ENCODE measurements at regions of chr7 and their contacts with region 1.

Region 1: DNA sequence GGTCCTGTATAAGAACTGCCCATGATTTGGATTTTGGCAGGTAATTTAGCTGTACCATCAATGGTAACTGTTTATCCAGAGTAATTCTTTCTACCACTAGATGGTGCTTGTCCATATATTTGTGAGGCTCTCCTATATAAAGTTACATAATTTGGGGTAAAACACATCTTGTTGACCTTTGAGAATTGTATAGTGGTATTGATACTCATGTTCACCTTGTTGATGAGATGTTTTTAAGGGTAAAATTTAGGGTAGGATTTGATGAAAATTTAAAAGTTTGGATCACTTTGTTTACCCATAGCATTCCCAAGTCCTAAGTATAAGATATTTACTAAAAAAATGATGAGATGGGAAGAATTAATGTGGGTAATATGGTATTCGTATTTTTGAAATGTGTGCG is 31.6 kb downstream of the ST7 start:
- DNase-seq: peak in 6 of 9 donors; percentile 10 to 50 (median 45)
- ATAC-seq: peak; percentile 79
- H3K4me3 ChIP-seq: no peak overlapping the region
- H3K4me3 Mint-ChIP-seq: no peak overlapping the region
- H3K27ac ChIP-seq: no peak overlapping the region
- H3K27ac Mint-ChIP-seq: no peak overlapping the region
- H3K4me1 ChIP-seq: no peaks in the 10 kb centered on the region
- H3K4me1 Mint-ChIP-seq: peaks cover 0 to 5% (median 0%) of the 10 kb centered on the region in 7 donors
- H3K27me3 ChIP-seq: no peaks in the 10 kb centered on the region
- H3K27me3 Mint-ChIP-seq: peaks cover 0 to 3% (median 0%) of the 10 kb centered on the region in 5 donors

Region 2: GRCh38 chr7:117014673-117015133 is 29.8 kb after region 1 on chr7:
- CTCF ChIA-PET with region 1: interaction called, 64 read pairs
- POLR2A ChIA-PET with region 1: no interaction called
- intact Hi-C with region 1: loop called (anchors 1 kb)
- DNase-seq: no peak
- ATAC-seq: peak; percentile 74
- H3K4me3 ChIP-seq: no peak overlapping the region
- H3K4me3 Mint-ChIP-seq: peak overlapping the region in 3 of 10 donors; percentile 1 to 45 (median 35)
- H3K27ac ChIP-seq: no peak overlapping the region
- H3K27ac Mint-ChIP-seq: no peak overlapping the region
- H3K4me1 ChIP-seq: peaks cover 9 to 21% of the 10 kb centered on the region in 2 donors
- H3K4me1 Mint-ChIP-seq: peaks cover 23 to 41% (median 33%) of the 10 kb centered on the region in 7 donors
- H3K27me3 ChIP-seq: no peaks in the 10 kb centered on the region
- H3K27me3 Mint-ChIP-seq: peaks cover 0 to 53% (median 0%) of the 10 kb centered on the region in 5 donors

Region 3: DNA sequence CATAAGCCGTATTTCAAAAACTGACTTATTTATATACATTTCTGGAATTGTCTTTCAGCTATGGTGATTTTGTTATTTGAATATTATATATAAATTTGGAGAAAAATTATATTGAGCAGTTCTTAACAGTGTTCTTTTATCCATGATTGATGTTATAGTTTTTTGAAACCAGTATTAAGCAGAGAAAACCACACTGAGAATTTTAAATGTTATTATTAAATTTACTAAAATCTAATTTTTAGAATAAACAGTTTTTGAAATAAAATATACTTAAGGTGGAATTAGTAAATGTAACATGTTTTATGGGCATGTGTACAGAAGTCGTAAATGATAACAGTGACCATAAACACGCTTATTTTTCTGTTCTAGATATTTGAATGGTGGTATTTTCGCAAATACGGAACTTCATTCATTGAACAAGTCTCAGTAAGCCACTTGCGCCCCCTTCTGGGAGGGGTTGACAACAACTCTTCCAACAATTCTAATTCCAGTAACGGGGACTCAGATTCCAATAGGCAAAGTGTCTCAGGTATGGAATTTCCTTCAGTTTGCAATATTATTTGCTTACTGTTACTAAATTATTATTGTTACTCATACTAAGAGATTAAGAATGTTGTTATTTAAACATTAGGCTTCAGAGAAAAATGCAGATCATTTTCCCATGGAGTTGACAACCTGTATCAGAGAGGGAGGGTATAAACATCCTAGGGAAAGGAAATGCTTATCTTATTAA is 134.4 kb after region 1 on chr7:
- CTCF ChIA-PET with region 1: interaction called, 68 read pairs
- POLR2A ChIA-PET with region 1: no interaction called
- intact Hi-C with region 1: loop called (anchors 1 kb)
- DNase-seq: peak; percentile 43 to 78 (median 69)
- ATAC-seq: peak; percentile 78
- H3K4me3 ChIP-seq: no peak overlapping the region
- H3K4me3 Mint-ChIP-seq: no peak overlapping the region
- H3K27ac ChIP-seq: no peak overlapping the region
- H3K27ac Mint-ChIP-seq: no peak overlapping the region
- H3K4me1 ChIP-seq: no peaks in the 10 kb centered on the region
- H3K4me1 Mint-ChIP-seq: no peaks in the 10 kb centered on the region
- H3K27me3 ChIP-seq: no peaks in the 10 kb centered on the region
- H3K27me3 Mint-ChIP-seq: peaks cover 0 to 27% (median 0%) of the 10 kb centered on the region in 5 donors

Region 4: GRCh38 chr7:117127585-117128168 is 142.8 kb after region 1 on chr7:
- CTCF ChIA-PET with region 1: interaction called, 68 read pairs
- POLR2A ChIA-PET with region 1: no interaction called
- intact Hi-C with region 1: loop called (anchors 1 kb)
- DNase-seq: peak in 8 of 9 donors; percentile 9 to 53 (median 44)
- ATAC-seq: peak; percentile 76
- H3K4me3 ChIP-seq: no peak overlapping the region
- H3K4me3 Mint-ChIP-seq: no peak overlapping the region
- H3K27ac ChIP-seq: no peak overlapping the region
- H3K27ac Mint-ChIP-seq: no peak overlapping the region
- H3K4me1 ChIP-seq: no peaks in the 10 kb centered on the region
- H3K4me1 Mint-ChIP-seq: no peaks in the 10 kb centered on the region
- H3K27me3 ChIP-seq: no peaks in the 10 kb centered on the region
- H3K27me3 Mint-ChIP-seq: peaks cover 0 to 11% (median 0%) of the 10 kb centered on the region in 5 donors

Region 5: DNA sequence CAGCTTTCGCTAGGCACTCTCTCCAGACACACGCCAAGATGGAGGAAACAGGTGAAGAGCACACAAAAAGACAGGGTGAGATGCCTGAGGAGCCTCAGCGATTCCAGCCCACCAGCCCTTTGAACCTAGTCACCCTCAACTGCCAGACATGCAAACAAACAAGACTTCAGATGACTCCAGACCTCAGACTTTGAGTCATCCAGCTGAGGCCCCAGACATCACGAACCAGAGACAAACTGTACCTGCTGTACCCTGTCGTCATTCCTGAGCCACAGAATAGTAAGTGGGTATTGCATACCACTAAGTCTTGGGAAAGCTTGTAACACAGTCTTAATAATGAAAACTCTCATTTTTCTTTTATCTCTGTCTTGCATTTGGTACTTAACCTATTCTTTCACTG is 1072.5 kb after region 1 on chr7:
- CTCF ChIA-PET with region 1: no interaction called
- POLR2A ChIA-PET with region 1: no interaction called
- intact Hi-C with region 1: no loop called
- DNase-seq: no peak
- ATAC-seq: no peak
- H3K4me3 ChIP-seq: no peak overlapping the region
- H3K4me3 Mint-ChIP-seq: no peak overlapping the region
- H3K27ac ChIP-seq: no peak overlapping the region
- H3K27ac Mint-ChIP-seq: no peak overlapping the region
- H3K4me1 ChIP-seq: no peaks in the 10 kb centered on the region
- H3K4me1 Mint-ChIP-seq: no peaks in the 10 kb centered on the region
- H3K27me3 ChIP-seq: no peaks in the 10 kb centered on the region
- H3K27me3 Mint-ChIP-seq: peaks cover under 1 to 16% (median 4%) of the 10 kb centered on the region in 5 donors